ENCODE measurements at regions of chr20 and their contacts with region 1.

Region 1: DNA sequence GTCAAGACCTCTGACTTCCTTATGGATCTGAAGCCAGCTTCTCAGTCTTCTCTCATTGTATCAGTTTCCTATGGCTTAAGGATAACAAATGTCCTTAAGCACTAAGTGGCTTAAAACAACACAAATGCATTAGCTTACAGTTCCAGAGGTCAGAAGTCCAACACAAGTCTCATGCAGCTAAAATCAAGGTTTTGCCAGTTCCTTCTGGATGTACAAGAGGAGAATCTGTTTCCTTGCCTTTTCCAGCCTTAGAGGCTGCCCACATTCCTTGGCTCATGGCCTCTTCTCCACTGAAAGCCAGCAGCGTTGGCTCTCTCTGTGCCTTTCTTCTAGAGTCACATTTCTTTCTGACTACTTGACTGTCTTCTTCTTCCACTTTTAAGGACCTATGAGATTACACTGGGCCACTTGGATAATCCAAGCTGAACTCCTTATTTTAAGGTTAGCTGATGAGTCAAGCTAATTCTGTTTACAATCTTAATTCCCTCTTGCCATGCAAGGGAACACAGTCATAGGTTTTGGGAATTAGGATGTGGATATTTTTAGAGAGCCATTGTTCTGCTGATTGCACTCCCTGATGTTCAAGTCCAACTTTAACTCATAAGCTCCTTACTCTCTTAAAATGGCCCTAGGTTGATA is 179.0 kb downstream of the BCAS1 start:
- DNase-seq: no peak
- H3K4me3 Mint-ChIP-seq: no peak overlapping the region
- H3K27ac Mint-ChIP-seq: no peak overlapping the region
- H3K4me1 Mint-ChIP-seq: peaks cover 40% of the 10 kb centered on the region
- H3K27me3 Mint-ChIP-seq: no peaks in the 10 kb centered on the region

Region 2: DNA sequence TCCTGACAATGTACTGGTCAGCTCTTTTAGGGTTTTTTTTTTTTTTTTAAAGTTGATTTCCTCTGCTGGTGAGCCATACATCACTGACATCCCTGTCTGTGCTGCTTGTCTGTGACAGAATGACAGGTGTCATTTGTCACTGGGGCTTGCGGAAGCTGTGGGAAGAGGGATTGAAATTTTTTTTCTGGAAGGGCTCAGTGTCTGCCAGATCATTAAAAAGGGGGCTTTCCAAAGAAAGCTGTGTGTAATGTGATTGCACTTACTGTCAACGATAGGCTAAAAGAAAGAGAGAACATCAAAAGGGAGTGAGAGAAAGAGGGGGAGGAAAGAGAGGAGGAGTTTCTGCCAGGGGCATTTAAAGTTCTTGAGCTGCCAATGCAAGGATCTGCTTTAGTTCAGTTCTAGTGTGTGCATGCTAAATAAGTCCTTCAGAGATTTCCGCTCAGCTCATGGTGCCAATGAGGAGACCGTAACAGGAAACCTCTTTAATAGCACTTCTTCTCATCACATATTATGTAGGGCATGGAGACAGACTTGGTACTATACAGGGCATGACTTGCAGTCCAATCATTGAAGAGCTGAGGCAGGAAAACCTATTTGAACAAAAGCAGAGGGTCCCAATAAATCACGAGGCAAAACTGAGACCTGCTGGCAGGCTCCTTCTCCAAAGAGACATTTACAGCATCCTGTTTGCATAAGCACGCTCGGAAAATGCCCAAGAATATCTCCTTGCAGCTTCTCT is 742.1 kb before region 1 on chr20:
- intact Hi-C with region 1: loop called (anchors 1 kb)
- DNase-seq: no peak
- H3K4me3 Mint-ChIP-seq: peak overlapping the region; percentile 45
- H3K27ac Mint-ChIP-seq: peak overlapping the region; percentile 75
- H3K4me1 Mint-ChIP-seq: peaks cover 64% of the 10 kb centered on the region
- H3K27me3 Mint-ChIP-seq: no peaks in the 10 kb centered on the region

Region 3: GRCh38 chr20:53643031-53643832 is 248.2 kb before region 1 on chr20:
- intact Hi-C with region 1: loop called (anchors 5 kb)
- DNase-seq: peak; percentile 66
- H3K4me3 Mint-ChIP-seq: peak overlapping the region; percentile 76
- H3K27ac Mint-ChIP-seq: peak overlapping the region; percentile 97
- H3K4me1 Mint-ChIP-seq: peaks cover 39% of the 10 kb centered on the region
- H3K27me3 Mint-ChIP-seq: no peaks in the 10 kb centered on the region

Region 4: GRCh38 chr20:53660078-53660909 is 231.1 kb before region 1 on chr20:
- intact Hi-C with region 1: loop called (anchors 1 kb)
- DNase-seq: no peak
- H3K4me3 Mint-ChIP-seq: peak overlapping the region; percentile 75
- H3K27ac Mint-ChIP-seq: peak overlapping the region; percentile 87
- H3K4me1 Mint-ChIP-seq: peaks cover 71% of the 10 kb centered on the region
- H3K27me3 Mint-ChIP-seq: no peaks in the 10 kb centered on the region

Region 5: GRCh38 chr20:53839423-53840176 is 51.8 kb before region 1 on chr20:
- intact Hi-C with region 1: loop called (anchors 2 kb)
- DNase-seq: peak; percentile 62
- H3K4me3 Mint-ChIP-seq: peak overlapping the region; percentile 80
- H3K27ac Mint-ChIP-seq: peak overlapping the region; percentile 96
- H3K4me1 Mint-ChIP-seq: peaks cover 72% of the 10 kb centered on the region
- H3K27me3 Mint-ChIP-seq: peaks cover 2% of the 10 kb centered on the region

Region 6: DNA sequence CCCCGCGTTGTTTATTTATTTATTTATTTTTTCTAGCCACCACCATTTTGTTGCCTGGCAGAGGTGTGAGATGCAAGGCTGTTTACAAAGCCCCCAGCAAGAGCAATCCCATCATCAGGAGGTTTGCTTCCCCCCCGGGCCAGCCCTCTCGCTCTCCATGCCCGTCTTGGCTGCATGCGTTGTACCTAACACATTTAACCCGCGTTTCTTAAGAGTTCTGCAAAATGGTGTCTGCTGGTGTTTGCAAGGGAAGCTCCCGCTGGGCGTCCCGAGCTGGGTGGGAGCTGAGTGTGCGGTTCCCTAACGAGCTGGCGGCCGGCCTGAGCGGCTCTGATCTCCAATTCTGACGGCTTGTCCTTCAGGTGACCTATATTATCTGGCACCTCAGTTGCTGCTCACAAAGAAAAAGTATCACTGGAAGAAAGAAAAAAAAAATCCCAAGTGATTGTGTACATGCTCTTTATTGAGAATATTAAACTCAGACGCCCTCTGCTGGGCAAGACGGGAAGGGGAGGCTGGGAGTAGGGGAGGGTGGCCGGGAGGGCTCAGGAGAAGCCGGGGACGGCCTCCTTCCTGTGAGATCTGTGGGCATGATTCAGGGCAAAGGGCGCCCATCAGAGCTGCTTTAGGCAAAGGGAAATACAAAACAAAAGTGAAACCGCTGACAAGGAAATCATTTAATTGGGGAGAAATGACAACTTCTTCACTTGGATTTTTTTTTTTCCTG is 24.2 kb after region 1 on chr20:
- intact Hi-C with region 1: loop called (anchors 1 kb)
- DNase-seq: peak; percentile 84
- H3K4me3 Mint-ChIP-seq: peak overlapping the region; percentile 89
- H3K27ac Mint-ChIP-seq: peak overlapping the region; percentile 93
- H3K4me1 Mint-ChIP-seq: peaks cover 42% of the 10 kb centered on the region
- H3K27me3 Mint-ChIP-seq: no peaks in the 10 kb centered on the region

Region 7: DNA sequence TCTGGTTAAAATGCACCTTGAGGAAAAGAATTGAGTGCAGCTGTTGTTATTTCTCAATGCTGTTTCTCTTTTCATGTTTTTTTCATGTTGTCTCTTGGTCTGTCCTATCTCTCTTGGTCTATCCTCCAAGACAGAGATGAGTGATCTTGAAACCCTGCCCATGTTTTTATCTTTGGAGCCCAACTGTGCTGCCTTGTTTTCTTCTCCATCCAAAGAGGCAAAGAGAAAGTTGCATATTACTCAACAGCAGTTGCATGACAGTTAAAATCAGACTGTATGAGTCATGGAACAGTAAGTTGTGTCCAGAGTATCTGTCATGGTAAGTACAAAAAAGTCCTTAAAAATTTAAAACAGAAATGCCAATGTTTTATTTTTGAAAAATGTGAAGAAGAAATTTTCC is 152.7 kb after region 1 on chr20:
- intact Hi-C with region 1: loop called (anchors 1 kb)
- DNase-seq: no peak
- H3K4me3 Mint-ChIP-seq: no peak overlapping the region
- H3K27ac Mint-ChIP-seq: peak overlapping the region; percentile 82
- H3K4me1 Mint-ChIP-seq: peaks cover 23% of the 10 kb centered on the region
- H3K27me3 Mint-ChIP-seq: peaks cover 4% of the 10 kb centered on the region

Region 8: DNA sequence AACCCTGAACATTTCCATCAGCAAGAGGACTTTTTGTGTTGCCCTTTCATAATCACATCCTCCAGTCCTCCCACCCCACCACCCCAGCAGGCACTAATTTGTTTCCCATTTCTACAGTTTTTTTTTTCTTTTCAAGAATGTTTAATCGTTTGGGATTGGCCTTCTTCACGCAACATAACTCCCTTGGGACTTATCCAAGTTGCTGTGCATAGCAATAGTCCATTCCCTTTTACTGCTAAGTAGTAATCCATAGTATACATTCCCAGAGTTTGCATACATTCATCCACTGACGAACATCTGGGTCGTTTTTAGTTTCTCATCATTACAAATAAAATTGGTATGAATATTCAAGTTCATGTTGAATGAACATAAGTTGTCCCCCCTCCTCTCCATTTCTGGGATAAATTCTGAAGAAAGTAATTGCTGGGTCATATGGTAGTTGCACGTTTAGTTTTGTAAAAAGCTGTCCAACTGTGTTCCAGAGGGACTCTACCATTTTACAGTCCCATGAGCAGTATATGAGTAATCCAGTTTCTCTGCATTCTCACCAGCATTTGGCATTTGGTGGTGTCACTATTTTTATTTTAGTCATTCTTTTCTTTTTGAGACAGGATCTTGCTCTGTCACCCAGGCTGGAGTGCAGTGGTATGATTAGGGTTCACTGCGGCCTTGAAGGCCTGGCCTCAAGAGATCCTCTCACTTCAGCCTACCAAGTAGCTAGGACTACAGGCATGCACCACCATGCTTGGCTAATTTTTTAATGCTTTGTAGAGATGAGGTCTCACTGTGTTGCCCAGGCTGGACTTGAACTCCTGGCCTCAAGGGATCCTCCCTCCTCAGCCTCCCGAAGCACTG is 674.8 kb after region 1 on chr20:
- intact Hi-C with region 1: no loop called
- DNase-seq: no peak
- H3K4me3 Mint-ChIP-seq: no peak overlapping the region
- H3K27ac Mint-ChIP-seq: no peak overlapping the region
- H3K4me1 Mint-ChIP-seq: no peaks in the 10 kb centered on the region
- H3K27me3 Mint-ChIP-seq: no peaks in the 10 kb centered on the region